ENCODE measurements at regions of chr1 and their contacts with region 1.

Region 1: GRCh38 chr1:178282949-178283367 is 189.1 kb downstream of the RASAL2 start:
- DNase-seq: no peak

Region 2: DNA sequence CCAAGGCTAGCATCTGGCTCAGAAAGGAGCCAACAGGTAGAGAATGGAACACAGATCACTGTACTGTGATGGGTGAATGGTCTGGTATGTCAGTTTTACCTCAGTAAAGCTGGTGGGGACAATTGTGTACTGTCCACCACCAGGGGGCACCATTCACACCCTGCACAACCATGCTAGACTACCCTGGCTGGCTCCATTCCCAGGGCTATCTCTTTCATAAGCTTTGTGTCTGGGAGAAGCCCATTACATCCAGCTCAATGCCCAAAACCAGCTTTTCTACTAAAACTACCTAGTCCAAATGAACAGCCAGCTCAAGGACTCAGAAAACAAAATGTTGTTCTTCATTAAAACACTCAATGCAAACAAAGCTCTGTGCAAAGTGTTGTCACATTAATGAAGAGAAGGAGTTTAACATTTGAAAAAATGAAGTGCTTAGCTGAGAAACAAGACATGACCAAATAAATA is 251.1 kb before region 1 on chr1:
- intact Hi-C with region 1: loop called (anchors 10 kb)
- DNase-seq: peak; percentile 57 to 95 (median 87)